ENCODE measurements at regions of chr10 and their contacts with region 1.

Region 1: GRCh38 chr10:97686962-97687784 is at the start of gene AVPI1:
- H3K4me3 ChIP-seq: peak within 1 kb of the TSS; percentile 71
- H3K27ac ChIP-seq: peak within 1 kb of the TSS; percentile 63; the same call in 1 of the 2 replicates
- H3K4me1 ChIP-seq: peaks cover 10% of the 10 kb centered on the region; the same call in 1 of the 2 replicates
- CTCF ChIP-seq: no peak

Region 2: DNA sequence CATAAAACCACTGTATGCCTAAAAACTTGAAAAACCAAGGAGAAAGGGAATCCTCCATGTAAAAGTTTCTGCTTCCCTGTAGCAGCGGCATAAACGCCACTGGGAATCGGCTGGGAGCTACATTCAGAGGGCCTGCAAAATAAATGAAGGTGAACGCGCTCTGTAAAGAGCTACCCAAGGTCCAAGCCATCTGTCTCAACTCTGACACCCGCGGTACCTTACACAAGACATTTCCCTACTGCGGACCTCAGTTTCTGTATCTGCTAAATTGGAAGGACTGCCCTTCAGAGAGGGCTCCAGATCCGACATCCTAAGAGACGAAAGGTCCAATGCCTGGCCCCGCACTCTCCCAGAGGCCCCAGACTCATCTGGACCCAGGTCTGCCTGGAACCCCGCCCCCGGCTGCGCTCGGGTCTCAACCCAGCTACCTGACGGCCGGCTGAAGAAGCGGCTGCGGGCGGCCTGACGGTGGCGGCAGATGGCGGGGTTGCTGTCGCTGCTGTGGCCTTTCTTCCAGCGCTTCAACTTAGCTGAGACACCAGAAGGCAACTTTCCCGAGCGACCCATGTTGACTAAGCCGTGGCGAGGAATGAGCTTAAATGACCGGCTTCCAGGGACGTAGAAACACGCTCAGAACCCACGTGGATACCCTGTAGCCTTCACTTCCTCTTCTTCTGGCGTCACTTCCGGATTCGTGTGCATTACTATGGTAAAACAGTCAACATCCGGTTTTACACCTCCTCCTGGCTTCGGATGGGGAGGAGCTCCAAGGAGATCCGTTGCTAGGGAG is 286.3 kb before region 1 on chr10 and contains the start of gene RRP12:
- CTCF ChIA-PET with region 1: no interaction called
- POLR2A ChIA-PET with region 1: no interaction called
- H3K4me3 ChIP-seq: peak within 1 kb of the TSS; percentile 79
- H3K27ac ChIP-seq: peak within 1 kb of the TSS; percentile 52
- H3K4me1 ChIP-seq: 0 out of 2 replicates have a peak, but pooled peaks cover 4% of the 10 kb centered on the region
- CTCF ChIP-seq: peak; percentile 58; the same call in 1 of the 2 replicates

Region 3: GRCh38 chr10:97640174-97640867 is 46.9 kb before region 1 on chr10 and contains the start of gene PI4K2A:
- CTCF ChIA-PET with region 1: no interaction called
- POLR2A ChIA-PET with region 1: interaction called, 20 read pairs
- H3K4me3 ChIP-seq: peak within 1 kb of the TSS; percentile 77
- H3K27ac ChIP-seq: peak within 1 kb of the TSS; percentile 70
- H3K4me1 ChIP-seq: 0 out of 2 replicates have a peak, but pooled peaks cover 2% of the 10 kb centered on the region
- CTCF ChIP-seq: no peak

Region 4: DNA sequence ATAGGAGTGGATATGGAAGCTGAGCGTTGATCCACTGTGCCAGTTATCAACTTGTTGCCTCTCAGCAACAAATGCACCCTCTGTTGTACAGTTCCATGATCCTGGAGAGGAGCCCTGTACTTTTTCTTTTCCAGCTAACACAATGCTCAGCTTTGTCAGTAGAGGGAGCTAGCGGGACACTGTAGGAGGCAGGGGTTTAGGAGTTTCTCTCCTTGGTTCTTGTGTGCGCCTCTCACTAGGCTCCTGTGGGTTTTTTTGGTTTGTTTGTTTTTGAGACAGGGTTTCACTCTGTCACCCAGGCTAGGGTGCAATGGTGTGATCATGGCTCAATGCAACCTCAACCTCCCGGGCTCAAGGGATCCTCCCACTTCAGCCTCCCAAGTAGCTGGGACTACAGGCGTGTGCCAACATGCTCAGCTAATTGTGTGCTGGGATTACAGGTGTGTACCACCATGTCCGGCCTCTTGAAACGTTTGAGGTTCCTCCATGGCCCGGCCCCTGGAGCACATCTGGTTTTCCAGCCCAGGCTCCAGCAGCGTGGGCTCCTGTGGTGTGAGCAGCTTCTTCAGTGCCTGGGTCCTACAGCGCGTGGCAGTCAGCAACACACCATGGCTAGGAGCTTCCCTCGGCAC is 14.4 kb after region 1 on chr10:
- CTCF ChIA-PET with region 1: interaction called, 52 read pairs
- POLR2A ChIA-PET with region 1: interaction called, 23 read pairs
- H3K4me3 ChIP-seq: no peak overlapping the region
- H3K27ac ChIP-seq: no peak overlapping the region
- H3K4me1 ChIP-seq: no peaks in the 10 kb centered on the region
- CTCF ChIP-seq: peak; percentile 82

Region 5: GRCh38 chr10:97731346-97732051 is 44.3 kb after region 1 on chr10:
- CTCF ChIA-PET with region 1: interaction called, 36 read pairs
- POLR2A ChIA-PET with region 1: interaction called, 30 read pairs
- H3K4me3 ChIP-seq: no peak overlapping the region
- H3K27ac ChIP-seq: no peak overlapping the region
- H3K4me1 ChIP-seq: no peaks in the 10 kb centered on the region
- CTCF ChIP-seq: peak; percentile 82

Region 6: GRCh38 chr10:97736902-97737769 is 50.0 kb after region 1 on chr10 and contains the start of gene ZFYVE27:
- CTCF ChIA-PET with region 1: interaction called, 36 read pairs
- POLR2A ChIA-PET with region 1: interaction called, 30 read pairs
- H3K4me3 ChIP-seq: peak within 1 kb of the TSS; percentile 91
- H3K27ac ChIP-seq: peak within 1 kb of the TSS; percentile 59; the same call in 1 of the 2 replicates
- H3K4me1 ChIP-seq: 0 out of 2 replicates have a peak, but pooled peaks cover 2% of the 10 kb centered on the region
- CTCF ChIP-seq: no peak; the same call in 1 of the 2 replicates

Region 7: GRCh38 chr10:97788552-97789442 is 101.6 kb after region 1 on chr10:
- CTCF ChIA-PET with region 1: no interaction called
- POLR2A ChIA-PET with region 1: no interaction called
- H3K4me3 ChIP-seq: no peak overlapping the region
- H3K27ac ChIP-seq: peak overlapping the region; percentile 68; the same call in 1 of the 2 replicates
- H3K4me1 ChIP-seq: no peaks in the 10 kb centered on the region
- CTCF ChIP-seq: 0 out of 2 replicates have a peak, but pooled peaks have one; percentile 12

Region 8: GRCh38 chr10:97827778-97828291 is 140.7 kb after region 1 on chr10:
- CTCF ChIA-PET with region 1: no interaction called
- POLR2A ChIA-PET with region 1: no interaction called
- H3K4me3 ChIP-seq: no peak overlapping the region
- H3K27ac ChIP-seq: no peak overlapping the region
- H3K4me1 ChIP-seq: no peaks in the 10 kb centered on the region
- CTCF ChIP-seq: no peak

Region 9: GRCh38 chr10:98055875-98056516 is 368.8 kb after region 1 on chr10:
- CTCF ChIA-PET with region 1: no interaction called
- POLR2A ChIA-PET with region 1: no interaction called
- H3K4me3 ChIP-seq: no peak overlapping the region
- H3K27ac ChIP-seq: no peak overlapping the region
- H3K4me1 ChIP-seq: no peaks in the 10 kb centered on the region
- CTCF ChIP-seq: no peak

Measured in HEK293 (cell line).